Left lung (tissue), 14 donors: ENCODE measurements at regions of chrX and their contacts with region 1.

Region 1: GRCh38 chrX:129925305-129926092 is 19.5 kb downstream of the UTP14A start:
- DNase-seq: peak in 3 of 4 donors; percentile 56 to 78 (median 60)
- ATAC-seq: peak; percentile 91
- H3K4me3 ChIP-seq: no peak overlapping the region
- H3K27ac ChIP-seq: no peak overlapping the region
- H3K4me1 ChIP-seq: peaks cover 0 to 6% of the 10 kb centered on the region in 2 donors
- H3K27me3 ChIP-seq: no peaks in the 10 kb centered on the region
- CTCF ChIP-seq: peak; percentile 52 to 60

Region 2: GRCh38 chrX:130028196-130028595 is 102.7 kb after region 1 on chrX:
- intact Hi-C with region 1: loop called in 1 of 2 experiments (anchors 5 kb)
- DNase-seq: peak in 2 of 4 donors; percentile 13 to 87
- ATAC-seq: peak; percentile 54
- H3K4me3 ChIP-seq: no peak overlapping the region
- H3K27ac ChIP-seq: no peak overlapping the region
- H3K4me1 ChIP-seq: peaks cover 0 to 8% of the 10 kb centered on the region in 2 donors
- H3K27me3 ChIP-seq: no peaks in the 10 kb centered on the region
- CTCF ChIP-seq: peak; percentile 55 to 76

Region 3: GRCh38 chrX:130060122-130061069 is 134.9 kb after region 1 on chrX:
- intact Hi-C with region 1: loop called in 1 of 2 experiments (anchors 10 kb)
- DNase-seq: peak; percentile 49 to 97 (median 80)
- ATAC-seq: peak; percentile 97
- H3K4me3 ChIP-seq: peak overlapping the region; percentile 29 to 44
- H3K27ac ChIP-seq: peak overlapping the region in 1 of 2 donors; percentile 68
- H3K4me1 ChIP-seq: peaks cover 0 to 4% of the 10 kb centered on the region in 2 donors
- H3K27me3 ChIP-seq: no peaks in the 10 kb centered on the region
- CTCF ChIP-seq: peak; percentile 82 to 90